GM12878 (cell line): ENCODE measurements at regions of chr5 and their contacts with region 1.

Region 1: DNA sequence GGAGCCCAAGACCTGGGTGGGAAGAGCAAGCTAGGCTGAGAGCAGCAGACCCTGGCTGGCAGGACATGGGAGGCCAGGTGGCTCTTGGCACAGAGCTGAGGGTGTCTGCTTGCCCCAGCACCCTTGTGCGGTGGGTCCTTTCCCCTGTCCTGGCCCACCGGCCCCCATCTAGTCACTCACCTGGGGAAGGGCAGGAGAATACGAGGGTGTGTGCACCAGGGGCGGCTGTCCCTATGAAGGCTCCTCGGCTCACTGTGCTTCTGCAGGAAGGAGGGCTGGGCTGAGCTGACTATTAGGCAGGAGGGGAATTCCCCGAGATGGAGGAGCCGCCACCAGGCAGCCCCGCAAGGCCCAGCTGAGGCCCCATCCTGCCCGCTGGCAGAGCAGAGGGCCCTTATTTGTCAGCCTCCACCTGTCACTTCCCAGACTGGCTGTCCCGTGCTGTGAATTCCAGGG is 6.1 kb upstream of the TNIP1 start:
- DNase-seq: no peak
- ATAC-seq: peak; percentile 79
- H3K4me3 ChIP-seq: peak overlapping the region; percentile 89
- H3K27ac ChIP-seq: peak overlapping the region; percentile 88
- H3K4me1 ChIP-seq: peaks cover 29% of the 10 kb centered on the region
- H3K27me3 ChIP-seq: no peaks in the 10 kb centered on the region
- CTCF ChIP-seq: no peak
- EP300 ChIP-seq: no peak
- POLR2A ChIP-seq: peak; percentile 89
- RAD21 ChIP-seq: no peak

Region 2: DNA sequence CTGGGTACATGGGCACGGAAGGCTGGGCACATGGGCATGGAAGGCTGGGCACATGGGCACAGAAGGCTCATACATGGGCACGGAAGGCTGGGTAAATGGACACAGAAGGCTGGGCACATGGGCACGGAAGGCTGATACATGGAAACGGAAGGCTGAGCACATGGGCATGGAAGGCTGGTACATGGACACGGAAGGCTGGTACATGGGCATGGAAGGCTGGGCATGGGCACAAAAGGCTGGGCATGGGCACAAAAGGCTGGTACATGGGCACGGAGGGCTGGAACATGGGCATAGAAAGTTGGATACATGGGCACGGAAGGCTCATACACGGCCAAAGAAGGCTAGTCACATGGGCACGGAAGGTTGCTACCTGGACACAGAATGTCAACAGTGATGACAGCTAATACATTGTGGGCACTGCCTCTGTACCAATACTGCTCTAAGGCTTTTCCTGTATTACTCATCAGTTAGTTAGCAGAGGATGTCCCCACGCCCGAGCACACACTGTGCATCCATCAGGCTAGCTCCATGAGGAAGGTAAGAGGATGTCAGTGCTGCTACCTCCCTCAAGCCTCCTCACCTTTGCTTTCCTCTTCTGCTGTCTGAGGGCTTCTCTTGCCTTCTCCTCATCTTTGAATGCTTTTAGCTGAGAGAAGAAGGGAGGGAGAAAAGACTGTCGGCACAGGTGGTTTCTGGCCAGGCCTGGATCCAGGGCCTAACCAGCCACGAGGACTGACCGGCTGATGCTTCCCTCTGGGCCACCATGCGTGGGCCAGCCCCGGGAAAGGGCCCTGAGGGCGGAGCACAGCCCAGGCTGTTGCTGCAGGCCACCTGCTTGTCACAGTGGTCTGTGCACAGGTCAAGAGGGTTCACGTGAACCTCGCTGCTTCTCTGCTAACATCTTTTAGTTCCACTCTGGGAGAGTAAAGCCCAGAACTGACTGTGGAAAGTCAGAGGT is 52.2 kb before region 1 on chr5:
- CTCF ChIA-PET with region 1: no interaction called
- POLR2A ChIA-PET with region 1: no interaction called
- RAD21 ChIA-PET with region 1: no interaction called
- SMC1A ChIA-PET with region 1: no interaction called
- in situ Hi-C with region 1: no loop called
- intact Hi-C with region 1: no loop called
- DNase-seq: no peak
- ATAC-seq: peak; percentile 27
- H3K4me3 ChIP-seq: no peak overlapping the region
- H3K27ac ChIP-seq: no peak overlapping the region
- H3K4me1 ChIP-seq: no peaks in the 10 kb centered on the region
- H3K27me3 ChIP-seq: no peaks in the 10 kb centered on the region
- CTCF ChIP-seq: no peak
- EP300 ChIP-seq: no peak
- POLR2A ChIP-seq: no peak; the same call in 1 of the 2 replicates
- RAD21 ChIP-seq: no peak

Region 3: GRCh38 chr5:151063142-151063949 is 23.6 kb before region 1 on chr5:
- CTCF ChIA-PET with region 1: interaction called, 5 read pairs
- POLR2A ChIA-PET with region 1: interaction called, 10 read pairs
- RAD21 ChIA-PET with region 1: interaction called, 19 read pairs
- SMC1A ChIA-PET with region 1: interaction called, 20 read pairs
- in situ Hi-C with region 1: no loop called
- intact Hi-C with region 1: no loop called
- DNase-seq: no peak
- ATAC-seq: no peak
- H3K4me3 ChIP-seq: no peak overlapping the region
- H3K27ac ChIP-seq: no peak overlapping the region; the same call in 1 of the 2 replicates
- H3K4me1 ChIP-seq: peaks cover 82% of the 10 kb centered on the region
- H3K27me3 ChIP-seq: no peaks in the 10 kb centered on the region
- CTCF ChIP-seq: no peak
- EP300 ChIP-seq: no peak
- POLR2A ChIP-seq: no peak; the same call in 1 of the 2 replicates
- RAD21 ChIP-seq: no peak

Region 4: DNA sequence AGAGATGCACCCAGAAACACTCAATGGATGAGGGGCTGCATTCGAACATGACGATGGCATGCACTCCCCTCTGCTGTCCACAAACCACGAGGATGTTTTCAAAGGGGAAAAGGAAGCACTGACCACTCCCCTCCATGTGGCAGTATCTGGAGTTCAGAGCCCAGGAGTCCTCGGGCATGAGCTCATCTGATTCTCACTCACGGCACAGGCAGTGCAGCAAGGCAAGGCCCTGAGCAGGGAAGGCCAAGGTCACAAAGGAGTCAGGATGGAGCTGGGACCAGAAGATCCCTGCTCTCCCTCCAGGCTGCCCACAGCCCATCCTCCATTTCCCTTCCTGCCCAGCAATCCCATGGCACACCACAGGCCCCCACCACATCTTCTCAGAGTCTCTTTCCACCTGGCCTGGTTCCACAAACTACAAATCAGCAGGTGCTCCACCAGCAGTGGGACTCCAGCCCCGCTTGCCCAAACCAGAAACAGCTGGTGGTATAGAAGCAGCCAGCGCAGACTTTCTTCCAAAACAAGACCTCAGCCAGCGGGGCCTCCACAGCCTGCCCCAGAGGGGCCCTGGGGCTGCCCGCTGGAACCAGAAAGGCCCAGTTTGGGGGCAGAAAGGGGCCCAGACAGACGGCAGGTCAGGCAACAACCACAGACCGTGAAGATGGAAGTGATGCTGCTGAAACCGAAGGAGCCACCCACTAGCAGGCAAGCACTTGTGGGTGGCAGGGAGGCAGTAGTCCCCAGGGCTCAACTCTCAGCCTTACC is 18.3 kb before region 1 on chr5:
- CTCF ChIA-PET with region 1: interaction called, 6 read pairs
- POLR2A ChIA-PET with region 1: interaction called, 20 read pairs
- RAD21 ChIA-PET with region 1: interaction called, 19 read pairs
- SMC1A ChIA-PET with region 1: interaction called, 16 read pairs
- in situ Hi-C with region 1: no loop called
- intact Hi-C with region 1: no loop called
- DNase-seq: no peak
- ATAC-seq: peak; percentile 78
- H3K4me3 ChIP-seq: peak overlapping the region; percentile 6; the same call in 1 of the 2 replicates
- H3K27ac ChIP-seq: peak overlapping the region; percentile 65
- H3K4me1 ChIP-seq: peaks cover 77% of the 10 kb centered on the region
- H3K27me3 ChIP-seq: no peaks in the 10 kb centered on the region
- CTCF ChIP-seq: no peak
- EP300 ChIP-seq: peak in 1 of 2 experiments; percentile 16; a peak in 1 of 4 replicates
- POLR2A ChIP-seq: no peak; the same call in none of the 2 replicates
- RAD21 ChIP-seq: no peak

Region 5: DNA sequence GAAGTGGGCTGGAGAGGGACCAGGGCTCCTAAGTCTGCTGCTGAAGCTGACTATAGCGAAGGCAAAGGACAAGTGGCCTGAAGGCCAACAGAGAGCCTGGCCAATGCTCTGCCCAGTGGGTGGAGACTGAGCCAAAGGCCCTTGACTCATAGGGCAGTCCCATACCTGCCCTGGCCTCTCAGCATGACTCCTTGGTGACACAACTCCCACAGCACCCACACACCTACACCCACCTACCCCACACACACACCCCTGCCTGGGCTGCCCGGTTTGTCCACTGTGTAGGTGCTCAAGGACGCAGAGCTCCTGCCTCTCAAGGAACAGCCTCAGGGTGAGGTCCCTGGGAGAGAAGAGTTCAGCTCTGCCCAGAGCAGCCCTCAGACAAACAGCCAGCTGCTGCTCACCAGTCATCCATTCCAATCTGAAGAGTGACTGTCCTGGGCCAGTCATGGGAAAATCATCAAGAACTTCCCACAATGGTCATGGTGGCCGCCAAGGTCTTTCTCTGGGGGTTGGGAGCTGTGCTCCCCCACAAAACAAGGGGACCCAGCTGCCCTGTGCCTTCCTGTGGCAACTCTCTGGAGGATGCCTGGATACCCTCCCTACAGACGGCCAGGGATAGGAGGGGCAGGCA is 11.1 kb before region 1 on chr5:
- CTCF ChIA-PET with region 1: interaction called, 6 read pairs
- POLR2A ChIA-PET with region 1: interaction called, 20 read pairs
- RAD21 ChIA-PET with region 1: interaction called, 19 read pairs
- SMC1A ChIA-PET with region 1: interaction called, 12 read pairs
- in situ Hi-C with region 1: no loop called
- intact Hi-C with region 1: no loop called
- DNase-seq: no peak
- ATAC-seq: peak; percentile 7
- H3K4me3 ChIP-seq: peak overlapping the region; percentile 89
- H3K27ac ChIP-seq: peak overlapping the region; percentile 90
- H3K4me1 ChIP-seq: peaks cover 45% of the 10 kb centered on the region
- H3K27me3 ChIP-seq: no peaks in the 10 kb centered on the region
- CTCF ChIP-seq: no peak
- EP300 ChIP-seq: no peak
- POLR2A ChIP-seq: peak; percentile 63
- RAD21 ChIP-seq: no peak

Region 6: GRCh38 chr5:151150471-151151262 is 63.7 kb after region 1 on chr5:
- CTCF ChIA-PET with region 1: interaction called, 8 read pairs
- POLR2A ChIA-PET with region 1: interaction called, 7 read pairs
- RAD21 ChIA-PET with region 1: interaction called, 5 read pairs
- SMC1A ChIA-PET with region 1: interaction called, 12 read pairs
- in situ Hi-C with region 1: no loop called
- intact Hi-C with region 1: no loop called
- DNase-seq: peak; percentile 50
- ATAC-seq: peak; percentile 51
- H3K4me3 ChIP-seq: peak overlapping the region; percentile 57
- H3K27ac ChIP-seq: peak overlapping the region; percentile 89
- H3K4me1 ChIP-seq: peaks cover 62% of the 10 kb centered on the region
- H3K27me3 ChIP-seq: no peaks in the 10 kb centered on the region
- CTCF ChIP-seq: no peak
- EP300 ChIP-seq: no peak
- POLR2A ChIP-seq: peak; percentile 70
- RAD21 ChIP-seq: no peak